ENCODE measurements at regions of chr9 and their contacts with region 1.

Region 1: GRCh38 chr9:92706216-92706940 is 36.4 kb upstream of the IPPK start:
- DNase-seq: peak in 4 of 9 donors; percentile 8 to 21 (median 18)
- ATAC-seq: peak; percentile 69
- H3K4me3 ChIP-seq: no peak overlapping the region
- H3K4me3 Mint-ChIP-seq: peak overlapping the region in 1 of 10 donors; percentile 19
- H3K27ac ChIP-seq: no peak overlapping the region
- H3K27ac Mint-ChIP-seq: peak overlapping the region in 4 of 9 donors; percentile 13 to 35 (median 26)
- H3K4me1 ChIP-seq: peaks cover 4 to 6% of the 10 kb centered on the region in 2 donors
- H3K4me1 Mint-ChIP-seq: peaks cover 5 to 25% (median 9%) of the 10 kb centered on the region in 7 donors
- H3K27me3 ChIP-seq: no peaks in the 10 kb centered on the region
- H3K27me3 Mint-ChIP-seq: no peaks in the 10 kb centered on the region

Region 2: GRCh38 chr9:92669890-92670708 is 36.3 kb before region 1 on chr9 and contains the start of gene IPPK:
- CTCF ChIA-PET with region 1: no interaction called
- POLR2A ChIA-PET with region 1: no interaction called
- intact Hi-C with region 1: loop called in 1 of 2 experiments (anchors 1 kb)
- DNase-seq: peak; percentile 92 to 99 (median 96)
- ATAC-seq: peak; percentile 98
- H3K4me3 ChIP-seq: peak within 1 kb of the TSS; percentile 100
- H3K4me3 Mint-ChIP-seq: peak within 1 kb of the TSS; percentile 83 to 98 (median 95)
- H3K27ac ChIP-seq: peak within 1 kb of the TSS; percentile 91
- H3K27ac Mint-ChIP-seq: peak within 1 kb of the TSS; percentile 90 to 98 (median 95)
- H3K4me1 ChIP-seq: peaks cover 16 to 23% of the 10 kb centered on the region in 2 donors
- H3K4me1 Mint-ChIP-seq: peaks cover 27 to 46% (median 36%) of the 10 kb centered on the region in 7 donors
- H3K27me3 ChIP-seq: no peaks in the 10 kb centered on the region
- H3K27me3 Mint-ChIP-seq: no peaks in the 10 kb centered on the region
- total RNA-seq, gene IPPK: 5.9 to 12.8 (median 7.4) TPM